OCI-LY7 (cell line): ENCODE measurements at regions of chr6 and their contacts with region 1.

Region 1: DNA sequence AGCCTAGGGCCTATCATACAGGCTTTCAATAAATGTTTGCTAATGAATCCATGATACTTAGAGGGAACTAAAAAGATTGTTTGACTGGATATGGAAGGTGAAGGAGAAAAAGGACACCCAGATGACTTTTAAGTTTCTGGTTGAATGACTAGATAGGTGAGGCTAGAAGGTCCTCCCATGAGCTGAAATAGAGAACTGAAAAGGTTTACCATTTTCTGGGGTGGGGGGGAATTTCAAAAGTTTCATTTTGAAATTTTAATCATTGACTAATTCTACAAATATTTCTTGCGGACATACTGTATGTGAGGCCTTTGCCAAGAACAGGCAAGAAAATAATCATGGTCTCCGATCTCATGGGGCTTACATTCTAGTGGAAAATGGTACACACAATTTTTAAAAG is 17.9 kb upstream of the ZBTB2 start:
- DNase-seq: no peak
- H3K4me3 ChIP-seq: no peak overlapping the region
- H3K27ac ChIP-seq: no peak overlapping the region
- H3K4me1 ChIP-seq: peaks cover 4% of the 10 kb centered on the region
- CTCF ChIP-seq: no peak

Region 2: GRCh38 chr6:151475653-151476523 is 66.6 kb after region 1 on chr6:
- CTCF ChIA-PET with region 1: no interaction called
- POLR2A ChIA-PET with region 1: interaction called, 3 read pairs
- intact Hi-C with region 1: loop called (anchors 5 kb)
- DNase-seq: peak; percentile 68
- H3K4me3 ChIP-seq: no peak overlapping the region
- H3K27ac ChIP-seq: no peak overlapping the region
- H3K4me1 ChIP-seq: peaks cover 15% of the 10 kb centered on the region
- CTCF ChIP-seq: peak; percentile 96

Region 3: GRCh38 chr6:152026291-152026690 is 617.0 kb after region 1 on chr6:
- CTCF ChIA-PET with region 1: no interaction called
- POLR2A ChIA-PET with region 1: no interaction called
- intact Hi-C with region 1: no loop called
- DNase-seq: no peak
- H3K4me3 ChIP-seq: no peak overlapping the region
- H3K27ac ChIP-seq: no peak overlapping the region
- H3K4me1 ChIP-seq: no peaks in the 10 kb centered on the region
- CTCF ChIP-seq: no peak